Uterus (tissue), 4 donors: ENCODE measurements at regions of chr12 and their contacts with region 1.

Region 1: DNA sequence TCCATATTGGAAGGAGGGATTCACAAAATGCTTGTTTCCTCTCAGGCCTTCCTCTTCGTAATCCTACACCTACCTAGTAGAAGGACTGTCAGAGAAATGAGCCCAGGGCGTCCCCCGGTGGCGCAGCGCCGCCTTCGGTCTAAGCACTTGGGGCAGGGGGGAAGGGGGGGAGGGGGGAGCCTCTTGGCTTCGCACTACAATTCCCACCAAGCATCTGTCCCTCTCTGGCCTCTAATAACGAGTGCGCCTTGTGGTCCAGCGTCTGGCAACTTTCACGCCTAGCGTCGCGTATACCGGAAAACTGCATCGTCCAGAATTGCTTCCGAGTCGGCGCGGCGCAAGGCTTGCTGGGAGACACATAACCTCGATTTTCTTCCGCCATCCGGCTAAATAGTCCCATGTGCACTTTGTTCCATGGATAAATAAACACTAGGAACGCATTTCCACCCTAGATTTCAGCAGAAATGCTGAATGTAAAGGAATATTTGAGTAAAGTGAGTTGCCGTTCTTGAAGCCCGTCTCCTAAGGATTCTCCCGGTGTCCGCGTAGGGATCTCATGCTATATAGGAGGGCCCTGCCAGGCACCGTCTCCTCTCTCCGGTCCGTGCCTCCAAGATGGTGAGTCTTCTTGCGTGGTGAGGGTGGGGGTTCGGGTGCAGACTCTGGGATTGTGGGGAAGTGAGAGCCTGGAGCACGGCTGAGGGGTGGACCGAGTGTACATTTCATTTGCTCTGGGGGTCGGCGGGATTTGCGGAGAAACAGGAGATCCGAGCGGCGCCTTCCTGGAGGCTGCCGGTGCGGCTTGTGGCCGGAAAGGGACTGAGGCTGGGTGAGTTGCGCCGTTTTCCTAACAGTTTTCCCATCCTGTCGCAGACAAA is at the start of gene RPS26:
- DNase-seq: peak; percentile 96 to 97
- H3K4me3 ChIP-seq: peak within 1 kb of the TSS; percentile 72 to 79
- H3K27ac ChIP-seq: peak within 1 kb of the TSS; percentile 91 to 92
- H3K4me1 ChIP-seq: peaks cover 0 to 14% of the 10 kb centered on the region in 2 donors
- H3K27me3 ChIP-seq: no peaks in the 10 kb centered on the region
- CTCF ChIP-seq: peak in 3 of 4 experiments; percentile 19 to 66 (median 57)
- POLR2A ChIP-seq: peak; percentile 23 to 73
- total RNA-seq, gene RPS26: 35.4 to 1,129 (median 240) TPM

Region 2: GRCh38 chr12:55743116-55743921 is 298.5 kb before region 1 on chr12 and contains the start of gene GDF11:
- intact Hi-C with region 1: no loop called
- DNase-seq: peak; percentile 61 to 64
- H3K4me3 ChIP-seq: peak within 1 kb of the TSS; percentile 53 to 61
- H3K27ac ChIP-seq: peak within 1 kb of the TSS; percentile 83 to 91
- H3K4me1 ChIP-seq: no peaks in the 10 kb centered on the region
- H3K27me3 ChIP-seq: no peaks in the 10 kb centered on the region
- CTCF ChIP-seq: peak in 1 of 4 experiments; percentile 10
- POLR2A ChIP-seq: peak in 1 of 2 donors; percentile 8
- total RNA-seq, gene GDF11: 0.77 to 17.1 (median 5.0) TPM

Region 3: GRCh38 chr12:55812088-55812487 is 229.7 kb before region 1 on chr12:
- intact Hi-C with region 1: no loop called
- DNase-seq: no peak
- H3K4me3 ChIP-seq: no peak overlapping the region
- H3K27ac ChIP-seq: no peak overlapping the region
- H3K4me1 ChIP-seq: peaks cover 3 to 10% of the 10 kb centered on the region in 2 donors
- H3K27me3 ChIP-seq: no peaks in the 10 kb centered on the region
- CTCF ChIP-seq: no peak
- POLR2A ChIP-seq: no peak

Region 4: DNA sequence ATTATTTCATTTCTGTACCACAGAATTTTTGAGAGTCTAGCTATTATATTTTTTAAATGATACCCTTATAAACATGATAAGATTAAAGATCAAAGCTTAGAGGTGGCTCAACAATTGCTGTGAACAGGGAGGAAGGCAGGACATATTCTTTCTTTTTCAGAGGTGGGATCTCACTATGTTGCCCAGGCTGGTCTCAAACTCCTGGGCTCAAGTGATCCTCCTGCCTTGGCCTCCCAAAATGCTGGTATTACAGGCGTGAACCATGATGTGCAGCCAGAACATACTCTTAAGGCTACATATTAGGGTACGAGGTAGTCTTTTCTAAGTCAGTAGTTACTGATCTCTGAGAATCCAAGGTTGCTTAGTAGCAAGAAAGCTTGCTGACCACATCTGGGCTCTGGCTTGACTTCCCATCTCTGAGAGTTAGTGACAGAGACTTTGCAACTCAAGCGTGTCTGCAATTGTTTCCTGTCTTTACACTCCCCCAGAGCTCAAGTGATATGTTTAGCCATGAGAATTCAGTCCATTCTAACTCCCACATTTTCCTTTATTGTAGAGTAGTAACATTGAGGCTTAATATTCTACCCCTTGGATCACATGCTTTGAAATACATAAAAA is 59.4 kb before region 1 on chr12:
- intact Hi-C with region 1: no loop called
- DNase-seq: no peak
- H3K4me3 ChIP-seq: no peak overlapping the region
- H3K27ac ChIP-seq: no peak overlapping the region
- H3K4me1 ChIP-seq: no peaks in the 10 kb centered on the region
- H3K27me3 ChIP-seq: no peaks in the 10 kb centered on the region
- CTCF ChIP-seq: no peak
- POLR2A ChIP-seq: no peak

Region 5: GRCh38 chr12:55996715-55997534 is 44.9 kb before region 1 on chr12 and contains the start of gene SUOX:
- intact Hi-C with region 1: loop called (anchors 10 kb)
- DNase-seq: peak; percentile 96 to 98
- H3K4me3 ChIP-seq: peak within 1 kb of the TSS; percentile 60 to 63
- H3K27ac ChIP-seq: peak within 1 kb of the TSS; percentile 81 to 85
- H3K4me1 ChIP-seq: no peaks in the 10 kb centered on the region
- H3K27me3 ChIP-seq: no peaks in the 10 kb centered on the region
- CTCF ChIP-seq: no peak
- POLR2A ChIP-seq: peak; percentile 56 to 63
- total RNA-seq, gene SUOX: 5.1 to 35.5 (median 26.7) TPM